Spleen (tissue), 13 donors: ENCODE measurements at regions of chr19 and their contacts with region 1.

Region 1: DNA sequence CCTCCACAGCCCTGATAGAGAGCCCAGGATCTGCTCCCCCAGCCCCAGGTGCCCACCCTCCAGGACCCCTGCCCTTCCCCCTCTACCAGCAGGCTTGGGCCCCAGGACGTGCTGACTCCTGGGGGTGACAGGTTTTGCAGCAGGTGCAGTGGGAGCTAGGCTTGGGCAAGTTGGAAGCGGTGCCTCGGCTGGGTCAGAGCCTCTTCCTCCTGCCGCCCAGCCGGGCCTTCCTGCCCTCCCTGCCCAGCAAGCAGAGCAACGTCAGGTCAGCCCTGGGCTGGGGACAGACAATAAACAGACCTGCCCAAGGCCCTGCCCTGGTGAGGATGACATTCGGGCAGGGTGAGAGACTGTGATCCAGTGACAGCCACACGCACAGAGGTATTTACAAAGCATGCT is 9.2 kb upstream of the NCCRP1 start:
- DNase-seq: no peak
- H3K4me3 ChIP-seq: no peak overlapping the region
- H3K27ac ChIP-seq: no peak overlapping the region
- H3K4me1 ChIP-seq: peaks cover 0 to 2% (median 0%) of the 10 kb centered on the region in 6 donors
- H3K27me3 ChIP-seq: peaks cover 0 to 28% (median 0%) of the 10 kb centered on the region in 7 donors
- CTCF ChIP-seq: peak in 5 of 11 experiments; percentile 10 to 54 (median 22)
- POLR2A ChIP-seq: no peak

Region 2: GRCh38 chr19:37635076-37636056 is 1552.2 kb before region 1 on chr19:
- intact Hi-C with region 1: no loop called
- DNase-seq: no peak
- H3K4me3 ChIP-seq: peak overlapping the region in 1 of 8 donors; percentile 4
- H3K27ac ChIP-seq: no peak overlapping the region
- H3K4me1 ChIP-seq: no peaks in the 10 kb centered on the region
- H3K27me3 ChIP-seq: no peaks in the 10 kb centered on the region
- CTCF ChIP-seq: no peak
- POLR2A ChIP-seq: no peak

Region 3: GRCh38 chr19:39125554-39126311 is 61.8 kb before region 1 on chr19 and contains the start of gene PAK4:
- intact Hi-C with region 1: loop called (anchors 10 kb)
- DNase-seq: peak; percentile 99
- H3K4me3 ChIP-seq: peak within 1 kb of the TSS; percentile 79 to 99 (median 95)
- H3K27ac ChIP-seq: peak within 1 kb of the TSS; percentile 49 to 93 (median 84)
- H3K4me1 ChIP-seq: peaks cover 0 to 74% (median 52%) of the 10 kb centered on the region in 6 donors
- H3K27me3 ChIP-seq: peaks cover 0 to 6% (median 0%) of the 10 kb centered on the region in 7 donors
- CTCF ChIP-seq: peak in 2 of 11 experiments; percentile 24 to 43
- POLR2A ChIP-seq: peak in 2 of 3 donors; percentile 5 to 32
- total RNA-seq, gene PAK4: 9.5 to 27.8 (median 19.8) TPM